ENCODE measurements at regions of chr6 and their contacts with region 1.

Region 1: DNA sequence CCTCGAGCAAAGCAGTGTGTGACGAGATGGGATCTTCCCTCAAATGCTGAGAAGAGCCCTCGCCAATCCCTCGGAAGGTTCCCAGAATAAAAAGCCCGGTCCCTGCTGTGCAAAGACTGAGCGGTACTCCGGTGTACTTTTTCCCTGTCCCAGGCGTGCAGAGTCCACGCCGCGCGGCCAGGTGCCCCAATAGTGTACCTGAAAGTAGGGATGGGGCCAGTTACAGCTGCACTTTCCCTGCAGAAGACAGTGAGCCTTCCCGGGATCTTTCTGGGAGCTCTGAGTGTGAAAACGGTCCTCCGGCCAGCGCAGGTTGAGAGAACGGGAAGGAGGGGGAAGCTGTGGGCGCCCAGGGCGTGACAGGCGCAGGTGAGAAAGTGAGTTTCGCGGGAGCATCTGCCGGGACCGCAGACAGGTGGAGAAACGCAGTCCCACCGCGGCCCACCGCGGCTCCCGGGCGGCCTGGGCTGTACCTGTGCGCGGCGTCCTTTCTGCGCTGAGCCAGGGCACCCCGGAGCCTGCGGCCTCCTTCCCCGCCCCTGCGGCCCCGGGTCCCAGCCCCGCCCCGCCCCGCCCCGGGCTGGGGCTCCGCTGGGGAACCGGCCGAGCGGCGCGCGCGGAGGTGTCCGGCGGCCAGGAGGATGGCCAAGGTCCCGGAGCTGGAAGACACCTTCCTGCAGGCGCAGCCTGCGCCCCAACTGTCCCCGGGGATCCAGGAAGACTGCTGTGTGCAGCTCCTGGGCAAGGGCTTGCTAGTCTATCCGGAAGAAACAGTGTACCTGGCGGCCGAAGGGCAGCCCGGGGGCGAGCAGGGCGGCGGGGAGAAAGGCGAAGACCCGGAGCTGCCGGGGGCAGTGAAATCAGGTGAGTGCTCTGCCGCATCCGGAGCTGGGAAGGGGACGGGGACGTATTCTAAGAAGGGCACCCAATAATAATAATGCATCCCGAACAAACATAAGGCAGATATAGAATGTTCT is at the start of gene RFX6:
- DNase-seq: peak; percentile 66
- ATAC-seq: peak; percentile 92
- H3K4me3 Mint-ChIP-seq: peak within 1 kb of the TSS; percentile 91
- H3K27ac Mint-ChIP-seq: no peak within 1 kb of the TSS
- H3K4me1 Mint-ChIP-seq: peaks cover 9% of the 10 kb centered on the region
- H3K27me3 Mint-ChIP-seq: peaks cover 59% of the 10 kb centered on the region
- CTCF ChIP-seq: no peak
- total RNA-seq, gene RFX6: 0.11 TPM in 1 of 3 replicates, not detected in the others

Region 2: GRCh38 chr6:116764961-116765851 is 111.7 kb before region 1 on chr6 and contains the start of gene FAM162B:
- CTCF ChIA-PET with region 1: interaction called, 12 read pairs
- POLR2A ChIA-PET with region 1: no interaction called
- DNase-seq: peak; percentile 67
- ATAC-seq: peak; percentile 70
- H3K4me3 Mint-ChIP-seq: peak within 1 kb of the TSS; percentile 74
- H3K27ac Mint-ChIP-seq: no peak within 1 kb of the TSS
- H3K4me1 Mint-ChIP-seq: peaks cover 14% of the 10 kb centered on the region
- H3K27me3 Mint-ChIP-seq: peaks cover 45% of the 10 kb centered on the region
- CTCF ChIP-seq: no peak
- total RNA-seq, gene FAM162B: 1.6 to 3.0 TPM (median 1.6 TPM) in 3 replicates